Dendritic cell treated with granulocyte-macrophage colony-stimulating factor and Interleukin-4, amounts not matched to agents 40 ng/mL and 50 ng/mL, for 4 days (primary cell): ENCODE measurements at regions of chr2 and their contacts with region 1.

Region 1: GRCh38 chr2:152097801-152098495 is 896 bp downstream of the CACNB4 start:
- H3K4me3 Mint-ChIP-seq: peak overlapping the region; percentile 93
- H3K27ac Mint-ChIP-seq: peak overlapping the region; percentile 9
- H3K4me1 Mint-ChIP-seq: peaks cover 44% of the 10 kb centered on the region
- H3K27me3 Mint-ChIP-seq: peaks cover 34% of the 10 kb centered on the region

Region 2: GRCh38 chr2:152047819-152048471 is 50.0 kb before region 1 on chr2:
- intact Hi-C with region 1: loop called (anchors 5 kb)
- H3K4me3 Mint-ChIP-seq: no peak overlapping the region
- H3K27ac Mint-ChIP-seq: peak overlapping the region; percentile 72
- H3K4me1 Mint-ChIP-seq: peaks cover 76% of the 10 kb centered on the region
- H3K27me3 Mint-ChIP-seq: no peaks in the 10 kb centered on the region